ENCODE measurements at regions of chr19 and their contacts with region 1.

Region 1: GRCh38 chr19:1039646-1040475 is at the start of gene ABCA7:
- DNase-seq: peak; percentile 97 to 99 (median 98)
- H3K4me3 ChIP-seq: peak within 1 kb of the TSS; percentile 23 to 80 (median 74)
- H3K27ac ChIP-seq: no peak within 1 kb of the TSS
- H3K4me1 ChIP-seq: peaks cover 6 to 46% (median 44%) of the 10 kb centered on the region in 4 experiments
- H3K27me3 ChIP-seq: no peaks in the 10 kb centered on the region

Region 2: GRCh38 chr19:940591-941291 is 99.1 kb before region 1 on chr19:
- CTCF ChIA-PET with region 1: no interaction called
- POLR2A ChIA-PET with region 1: no interaction called
- DNase-seq: peak; percentile 90 to 96 (median 94)
- H3K4me3 ChIP-seq: peak overlapping the region in 4 of 7 experiments; percentile 38 to 67 (median 58)
- H3K27ac ChIP-seq: peak overlapping the region; percentile 46 to 76
- H3K4me1 ChIP-seq: peaks cover 0 to 49% (median 45%) of the 10 kb centered on the region in 4 experiments
- H3K27me3 ChIP-seq: no peaks in the 10 kb centered on the region

Region 3: GRCh38 chr19:1001538-1002166 is 38.2 kb before region 1 on chr19:
- CTCF ChIA-PET with region 1: no interaction called
- POLR2A ChIA-PET with region 1: no interaction called
- DNase-seq: peak in 2 of 3 donors; percentile 57 to 61
- H3K4me3 ChIP-seq: peak overlapping the region in 1 of 7 experiments; percentile 31
- H3K27ac ChIP-seq: no peak overlapping the region
- H3K4me1 ChIP-seq: peaks cover 0 to 17% (median 13%) of the 10 kb centered on the region in 4 experiments
- H3K27me3 ChIP-seq: peaks cover 0 to 61% (median 20%) of the 10 kb centered on the region in 5 experiments

Region 4: GRCh38 chr19:1026189-1027019 is 13.5 kb before region 1 on chr19 and contains the start of gene CNN2:
- CTCF ChIA-PET with region 1: interaction called, 44 read pairs
- POLR2A ChIA-PET with region 1: interaction called, 4 read pairs
- DNase-seq: peak; percentile 48 to 68 (median 63)
- H3K4me3 ChIP-seq: peak within 1 kb of the TSS; percentile 74 to 92 (median 81)
- H3K27ac ChIP-seq: peak within 1 kb of the TSS; percentile 58 to 85
- H3K4me1 ChIP-seq: peaks cover 0 to 36% (median 28%) of the 10 kb centered on the region in 4 experiments
- H3K27me3 ChIP-seq: no peaks in the 10 kb centered on the region

Measured in common myeloid progenitor, CD34-positive (primary cell).